Common myeloid progenitor, CD34-positive (primary cell): ENCODE measurements at regions of chr2 and their contacts with region 1.

Region 1: GRCh38 chr2:199979832-199980628 is 24.6 kb downstream of the MAIP1 start:
- DNase-seq: peak; percentile 79 to 86 (median 79)
- H3K4me3 ChIP-seq: peak overlapping the region in 4 of 7 experiments; percentile 9 to 44 (median 36)
- H3K27ac ChIP-seq: no peak overlapping the region
- H3K4me1 ChIP-seq: peaks cover 0 to 3% (median 0%) of the 10 kb centered on the region in 4 experiments
- H3K27me3 ChIP-seq: no peaks in the 10 kb centered on the region

Region 2: DNA sequence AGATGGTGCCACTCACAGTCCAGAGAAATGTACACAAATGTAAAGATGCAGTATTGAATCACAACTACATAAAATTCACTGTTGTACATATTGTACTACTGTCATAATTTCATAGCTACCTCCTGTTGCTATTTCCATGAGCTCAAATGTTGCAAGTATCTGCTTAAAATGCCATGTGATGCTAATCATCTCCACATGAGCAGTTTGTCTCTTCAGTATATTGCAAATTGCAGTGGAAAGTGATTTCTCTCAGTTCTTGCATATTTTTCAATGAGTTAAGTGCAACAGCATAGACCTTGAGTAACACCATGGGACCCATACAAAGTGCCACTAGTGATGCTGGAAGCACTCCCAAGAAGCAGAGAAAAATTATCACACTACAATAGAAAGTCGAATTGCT is 27.3 kb after region 1 on chr2:
- CTCF ChIA-PET with region 1: no interaction called
- POLR2A ChIA-PET with region 1: no interaction called
- DNase-seq: no peak
- H3K4me3 ChIP-seq: no peak overlapping the region
- H3K27ac ChIP-seq: no peak overlapping the region
- H3K4me1 ChIP-seq: no peaks in the 10 kb centered on the region
- H3K27me3 ChIP-seq: no peaks in the 10 kb centered on the region

Region 3: DNA sequence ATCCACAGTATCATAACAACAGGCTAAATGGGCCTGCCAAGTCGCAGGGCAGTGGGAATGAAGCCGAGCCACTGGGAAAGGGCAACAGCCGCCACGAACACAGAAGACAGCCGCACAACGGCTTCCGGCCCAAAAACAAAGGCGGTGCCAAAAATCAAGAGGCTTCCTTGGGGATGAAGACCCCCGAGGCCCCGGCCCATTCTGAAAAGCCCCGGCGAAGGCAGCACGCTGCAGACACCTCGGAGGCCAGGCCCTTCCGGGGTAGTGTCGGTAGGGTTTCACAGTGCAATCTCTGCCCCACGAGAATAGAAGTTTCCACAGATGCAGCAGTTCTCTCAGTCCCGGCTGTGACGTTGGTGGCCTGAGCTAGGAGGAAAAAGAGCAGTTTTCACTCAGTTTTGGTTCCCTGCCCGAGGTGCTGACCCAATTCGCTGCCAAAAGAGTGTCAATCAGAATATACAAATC is 497.7 kb after region 1 on chr2:
- CTCF ChIA-PET with region 1: interaction called, 64 read pairs
- POLR2A ChIA-PET with region 1: no interaction called
- DNase-seq: no peak
- H3K4me3 ChIP-seq: no peak overlapping the region
- H3K27ac ChIP-seq: no peak overlapping the region
- H3K4me1 ChIP-seq: peaks cover 0 to 15% (median 2%) of the 10 kb centered on the region in 4 experiments
- H3K27me3 ChIP-seq: no peaks in the 10 kb centered on the region

Region 4: GRCh38 chr2:200509612-200510433 is 529.8 kb after region 1 on chr2 and contains the start of gene KCTD18:
- CTCF ChIA-PET with region 1: no interaction called
- POLR2A ChIA-PET with region 1: no interaction called
- DNase-seq: peak; percentile 81 to 88 (median 85)
- H3K4me3 ChIP-seq: peak within 1 kb of the TSS; percentile 52 to 95 (median 79)
- H3K27ac ChIP-seq: peak within 1 kb of the TSS; percentile 62 to 83
- H3K4me1 ChIP-seq: peaks cover 5 to 16% (median 11%) of the 10 kb centered on the region in 4 experiments
- H3K27me3 ChIP-seq: no peaks in the 10 kb centered on the region